ENCODE measurements at regions of chr20 and their contacts with region 1.

Region 1: DNA sequence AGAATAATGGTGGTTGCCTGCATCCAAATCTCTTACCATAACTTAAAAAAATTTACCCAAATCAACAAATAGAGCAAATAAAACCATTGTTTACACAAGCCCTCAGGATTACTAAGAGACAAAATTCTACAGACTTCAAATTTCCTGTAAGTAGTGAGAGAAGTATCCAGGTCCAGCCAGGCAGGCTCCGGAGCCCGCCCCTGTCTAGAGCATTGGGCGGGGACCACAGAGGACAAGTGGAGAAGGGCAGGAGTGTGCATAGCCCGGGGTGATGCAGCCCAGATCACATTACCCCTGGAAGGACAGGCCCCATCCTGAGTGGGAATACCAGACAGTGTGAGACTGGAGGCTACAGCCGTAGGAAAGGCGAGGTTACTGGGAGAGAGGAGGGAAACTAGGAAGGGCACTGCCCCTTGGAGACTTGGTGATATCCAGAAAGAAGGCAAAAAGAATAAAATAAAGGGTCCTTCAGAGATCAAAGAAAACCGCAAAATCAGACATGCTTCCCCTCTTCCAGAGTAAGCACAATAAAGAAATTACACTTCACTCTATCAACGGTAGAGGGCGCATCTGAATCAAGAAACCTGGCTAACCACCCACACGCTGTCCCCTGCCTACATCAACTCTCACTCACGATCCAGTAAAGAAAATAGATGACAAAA is 26.6 kb downstream of the RIN2 start:
- ATAC-seq: peak; percentile 88 to 96 (median 92)
- H3K4me3 ChIP-seq: no peak overlapping the region
- H3K27ac ChIP-seq: no peak overlapping the region
- H3K4me1 ChIP-seq: peaks cover 11 to 16% of the 10 kb centered on the region in 2 donors

Region 2: DNA sequence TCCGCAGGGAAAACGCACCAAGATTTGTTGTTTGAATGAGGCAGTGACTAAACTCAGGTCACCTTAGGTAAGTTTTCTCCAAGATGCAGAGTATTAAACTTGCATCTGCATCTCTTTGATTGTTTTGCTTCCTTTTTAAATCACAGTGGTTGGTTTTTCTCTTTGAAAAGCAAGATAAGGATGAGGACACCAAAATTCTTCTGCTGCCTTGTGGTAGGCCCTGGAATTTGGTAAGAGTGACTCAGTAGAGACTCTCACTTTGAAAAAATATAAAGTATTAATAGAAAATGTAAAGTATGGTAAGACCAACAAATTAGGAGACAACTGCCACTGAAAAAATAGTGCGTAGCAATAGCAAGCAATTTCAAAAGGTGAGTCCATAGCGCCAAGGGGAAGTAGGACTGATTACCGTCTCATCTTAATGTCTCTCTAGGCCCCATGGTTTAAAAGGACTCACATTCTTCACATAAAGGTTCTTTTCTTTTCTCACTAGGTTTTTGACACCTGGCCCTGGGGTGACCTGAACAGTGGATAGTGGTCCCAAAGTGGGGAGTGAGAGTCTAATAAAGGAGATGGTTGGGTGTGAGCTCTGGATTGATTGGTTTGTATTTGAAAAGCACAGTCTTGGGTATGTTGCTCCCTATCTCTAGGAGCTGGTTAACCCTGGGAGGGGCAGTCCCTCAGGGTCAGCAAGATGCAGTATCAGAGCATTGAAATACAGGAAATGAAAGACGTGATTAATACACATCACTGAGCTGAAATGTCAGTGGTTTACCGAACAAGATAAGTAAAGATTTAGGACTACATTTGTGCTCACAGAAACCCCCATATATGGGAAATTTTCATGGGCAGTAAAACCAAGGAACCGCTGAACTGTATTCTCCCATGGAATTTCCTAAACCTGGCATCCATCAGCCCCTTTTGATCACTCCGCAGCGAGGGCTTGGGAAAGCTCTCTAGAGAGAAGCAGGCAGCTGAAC is 351.0 kb before region 1 on chr20:
- in situ Hi-C with region 1: no loop called
- ATAC-seq: no peak
- H3K4me3 ChIP-seq: no peak overlapping the region
- H3K27ac ChIP-seq: no peak overlapping the region
- H3K4me1 ChIP-seq: peaks cover 26 to 56% of the 10 kb centered on the region in 2 donors

Region 3: GRCh38 chr20:19995220-19995863 is 210.7 kb after region 1 on chr20:
- in situ Hi-C with region 1: loop called in 6 of 9 experiments (anchors 25 kb)
- ATAC-seq: peak in 3 of 8 experiments; percentile 4 to 20 (median 10)
- H3K4me3 ChIP-seq: no peak overlapping the region
- H3K27ac ChIP-seq: no peak overlapping the region
- H3K4me1 ChIP-seq: peaks cover 21 to 23% of the 10 kb centered on the region in 2 donors

Region 4: GRCh38 chr20:20017001-20017843 is 232.6 kb after region 1 on chr20 and contains the start of gene NAA20:
- in situ Hi-C with region 1: loop called in 2 of 9 experiments (anchors 25 kb)
- ATAC-seq: peak; percentile 95 to 99 (median 98)
- H3K4me3 ChIP-seq: peak within 1 kb of the TSS; percentile 58 to 99 (median 76)
- H3K27ac ChIP-seq: peak within 1 kb of the TSS; percentile 71 to 90
- H3K4me1 ChIP-seq: peaks cover 8 to 9% of the 10 kb centered on the region in 2 donors
- total RNA-seq, gene NAA20: 33.5 to 64.3 (median 44.4) TPM

Measured in motor neuron (in vitro differentiated cells).